OCI-LY7 (cell line): ENCODE measurements at regions of chr7 and their contacts with region 1.

Region 1: DNA sequence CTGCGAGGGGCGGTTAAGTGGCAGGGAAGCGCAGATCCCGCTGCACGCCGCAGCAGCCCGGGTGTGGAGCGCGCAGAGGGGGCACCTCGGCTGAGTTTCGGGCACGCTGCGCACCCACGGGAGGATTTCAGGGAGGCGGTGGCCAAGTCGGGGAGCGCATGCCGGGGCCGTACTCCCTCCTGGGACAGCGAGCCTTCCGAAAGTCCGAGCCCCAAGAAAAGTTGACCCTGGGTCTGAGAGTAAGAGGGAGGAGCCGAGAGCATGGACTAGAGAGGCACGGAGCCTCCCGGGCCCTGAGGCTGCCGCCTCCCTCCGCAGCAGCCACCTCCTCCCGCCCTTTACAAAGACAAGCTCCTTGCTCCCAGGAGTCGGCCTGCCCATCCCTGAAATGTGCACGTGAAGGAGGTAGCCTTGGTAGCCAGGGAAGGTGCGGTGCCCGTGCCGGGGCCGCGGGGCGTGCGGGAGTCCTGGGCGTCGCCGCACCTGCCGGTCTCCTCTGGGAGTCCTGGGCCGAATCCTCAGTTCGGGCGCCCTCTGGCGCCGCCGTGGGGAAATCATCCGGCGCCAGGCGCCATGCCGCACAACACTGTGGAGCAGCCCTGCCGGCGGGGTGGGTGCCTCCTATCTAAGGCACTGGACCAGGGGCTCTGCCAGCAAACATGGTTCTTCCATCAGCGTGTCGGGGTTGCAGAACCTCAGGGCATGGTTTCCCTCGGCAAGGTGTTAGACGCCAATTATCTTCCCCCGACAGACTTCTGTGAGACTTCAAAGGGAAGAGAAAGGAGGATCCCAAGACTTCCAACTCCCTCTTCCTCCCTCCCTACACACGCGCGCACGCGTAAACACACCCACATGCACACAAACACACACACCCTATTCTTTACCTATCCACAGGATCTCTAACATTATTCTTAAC is 104.0 kb downstream of the TRIL start:
- DNase-seq: peak; percentile 72
- H3K4me3 ChIP-seq: peak overlapping the region; percentile 45
- H3K27ac ChIP-seq: no peak overlapping the region
- H3K4me1 ChIP-seq: peaks cover 7% of the 10 kb centered on the region
- CTCF ChIP-seq: peak; percentile 84

Region 2: DNA sequence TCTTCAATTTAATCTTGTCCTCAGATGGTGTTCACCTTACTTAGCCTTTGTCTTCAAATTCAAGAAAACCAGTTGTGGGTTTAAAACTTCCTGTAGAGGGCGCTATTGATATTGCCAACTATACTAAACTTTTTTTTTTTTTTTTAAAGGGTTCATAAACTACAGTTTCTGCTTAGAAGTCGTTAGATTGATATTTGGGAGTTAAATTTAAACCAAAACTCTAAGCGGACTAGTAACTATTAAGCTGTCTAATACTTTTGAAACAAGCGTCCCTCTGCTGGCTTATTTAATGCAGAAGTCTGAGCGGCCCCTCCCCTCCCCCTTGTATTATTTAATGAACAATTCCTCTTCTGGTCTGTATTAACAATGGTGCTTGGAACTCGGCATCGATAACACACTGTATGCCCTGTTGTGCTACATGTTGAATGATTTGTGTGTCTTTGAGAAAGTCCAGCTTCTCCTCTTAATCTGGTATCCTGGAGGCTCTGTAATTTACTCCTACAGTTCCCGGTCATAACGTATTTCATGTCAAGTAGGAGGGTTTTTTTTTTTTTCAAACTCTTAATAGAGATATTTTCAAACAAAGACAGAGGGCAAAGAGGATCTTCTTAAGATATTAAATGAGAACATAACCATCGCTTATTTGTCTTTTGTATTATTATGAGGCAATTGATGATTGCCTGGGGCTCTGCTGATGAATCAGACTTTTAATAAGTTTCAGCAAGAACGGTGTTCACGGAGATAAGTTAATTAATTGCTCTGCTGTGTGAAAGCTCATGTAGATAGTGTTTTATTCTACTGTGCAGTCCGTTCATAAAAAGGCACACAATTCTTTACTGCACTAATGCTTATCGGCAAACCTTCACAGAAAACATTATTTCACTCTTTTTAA is 464.3 kb before region 1 on chr7:
- CTCF ChIA-PET with region 1: no interaction called
- POLR2A ChIA-PET with region 1: no interaction called
- intact Hi-C with region 1: loop called (anchors 1 kb)
- DNase-seq: peak; percentile 75
- H3K4me3 ChIP-seq: no peak overlapping the region
- H3K27ac ChIP-seq: no peak overlapping the region
- H3K4me1 ChIP-seq: no peaks in the 10 kb centered on the region
- CTCF ChIP-seq: peak; percentile 99

Region 3: DNA sequence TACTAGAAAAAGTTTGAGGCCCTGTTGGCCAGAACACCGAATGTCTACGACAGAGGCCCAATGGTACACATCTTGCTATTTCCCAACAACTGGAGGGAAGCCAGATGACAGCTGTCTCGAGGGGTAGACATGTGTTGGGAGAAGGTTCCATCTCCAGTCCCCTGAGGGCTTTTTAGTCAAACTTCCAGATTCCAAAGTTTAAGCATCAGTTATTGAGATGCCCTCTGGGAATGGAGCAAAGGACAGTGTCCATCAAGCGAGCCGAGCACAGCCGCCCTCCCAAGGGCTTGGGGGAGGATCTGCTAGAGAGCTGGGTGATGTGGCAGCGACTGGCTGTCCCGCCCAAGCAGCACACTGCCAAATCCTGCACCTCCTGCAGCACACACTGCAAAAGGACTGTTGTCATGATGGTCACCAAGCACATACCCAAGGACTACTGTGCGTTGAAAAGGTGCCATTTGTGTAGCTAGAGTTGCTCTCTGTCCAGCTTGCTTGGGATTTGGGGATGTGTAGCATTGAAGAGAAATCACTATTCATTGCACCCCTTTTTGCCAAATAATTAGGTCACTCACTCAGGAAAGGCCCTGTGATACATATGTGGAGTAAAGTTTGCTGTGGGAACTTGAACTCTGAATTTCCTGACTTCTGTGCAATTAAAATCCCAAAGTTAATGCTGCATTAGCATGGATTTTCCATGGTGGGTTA is 60.6 kb before region 1 on chr7:
- CTCF ChIA-PET with region 1: no interaction called
- POLR2A ChIA-PET with region 1: no interaction called
- intact Hi-C with region 1: no loop called
- DNase-seq: no peak
- H3K4me3 ChIP-seq: no peak overlapping the region
- H3K27ac ChIP-seq: no peak overlapping the region
- H3K4me1 ChIP-seq: no peaks in the 10 kb centered on the region
- CTCF ChIP-seq: no peak

Region 4: GRCh38 chr7:28808796-28809527 is 45.1 kb before region 1 on chr7:
- CTCF ChIA-PET with region 1: no interaction called
- POLR2A ChIA-PET with region 1: no interaction called
- intact Hi-C with region 1: loop called (anchors 5 kb)
- DNase-seq: peak; percentile 28
- H3K4me3 ChIP-seq: no peak overlapping the region
- H3K27ac ChIP-seq: no peak overlapping the region
- H3K4me1 ChIP-seq: peaks cover 8% of the 10 kb centered on the region
- CTCF ChIP-seq: peak; percentile 60

Region 5: DNA sequence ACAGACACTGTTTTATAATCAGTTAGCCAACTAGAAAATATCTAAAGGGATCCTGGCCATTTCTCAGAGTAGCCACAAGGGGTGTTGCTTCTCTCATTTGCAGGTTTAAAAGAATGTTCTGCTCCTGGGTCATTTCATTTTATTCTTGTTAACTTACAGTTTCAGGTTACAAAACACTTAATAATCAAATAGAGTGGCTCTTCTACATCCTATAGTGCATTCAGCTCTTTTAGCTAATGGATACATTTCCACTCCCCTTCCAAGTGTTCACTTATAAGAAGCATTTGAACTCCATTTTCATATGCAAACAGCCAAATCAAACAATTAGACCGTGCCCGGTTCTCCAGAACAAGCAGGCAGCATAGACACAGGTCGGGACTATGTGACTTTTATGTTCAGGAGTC is 13.5 kb before region 1 on chr7:
- CTCF ChIA-PET with region 1: no interaction called
- POLR2A ChIA-PET with region 1: no interaction called
- intact Hi-C with region 1: no loop called
- DNase-seq: no peak
- H3K4me3 ChIP-seq: no peak overlapping the region
- H3K27ac ChIP-seq: no peak overlapping the region
- H3K4me1 ChIP-seq: no peaks in the 10 kb centered on the region
- CTCF ChIP-seq: peak; percentile 67